ENCODE measurements at regions of chr13 and their contacts with region 1.

Region 1: DNA sequence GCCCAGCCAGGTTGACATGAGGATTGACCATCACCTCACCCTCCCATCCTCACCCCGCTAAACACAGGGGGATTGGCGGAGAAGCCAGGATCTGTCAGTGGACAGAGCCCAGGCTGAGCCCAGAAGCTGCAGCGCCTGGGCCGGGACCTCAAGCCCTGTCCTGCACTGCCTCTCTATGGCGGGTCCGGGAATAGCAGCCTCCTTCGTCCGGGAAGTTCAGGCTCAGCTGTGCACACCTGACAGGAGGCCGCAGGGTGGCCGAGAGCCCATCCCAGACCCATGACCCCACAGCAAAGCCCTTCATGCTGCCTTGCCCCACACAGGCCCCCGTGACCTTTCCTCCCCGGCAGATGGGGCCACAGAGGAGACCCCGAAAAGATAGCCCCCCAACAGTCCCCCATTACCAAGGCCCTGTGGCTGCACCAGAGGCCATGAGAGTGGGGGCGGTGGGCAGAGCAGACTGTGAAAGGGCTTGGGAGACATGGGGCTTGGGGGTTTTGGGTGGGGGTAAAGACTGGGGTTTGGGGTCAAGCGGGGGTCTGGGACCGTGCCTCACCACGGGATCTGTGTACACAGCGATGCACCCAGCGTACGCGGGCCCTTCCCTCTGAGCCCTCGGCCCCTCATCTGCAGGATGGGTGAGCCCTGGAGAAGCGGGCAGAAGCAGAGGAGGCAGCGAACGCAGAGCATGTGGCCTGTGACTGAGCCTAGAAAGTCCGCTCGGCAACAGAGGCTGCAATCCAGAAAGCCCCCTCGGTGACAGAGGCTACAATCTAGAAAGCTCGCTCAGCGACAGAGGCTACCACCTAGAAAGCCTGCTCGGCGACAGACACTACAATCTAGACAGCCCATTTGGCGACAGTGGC is 68.1 kb downstream of the SPACA7 start:
- DNase-seq: peak; percentile 88
- H3K4me3 ChIP-seq: peak overlapping the region in 1 of 2 experiments; percentile 49; a peak in 2 of 4 replicates
- H3K27ac ChIP-seq: no peak overlapping the region
- H3K4me1 ChIP-seq: no peaks in the 10 kb centered on the region; a peak in 1 of 4 replicates
- H3K27me3 ChIP-seq: peaks cover 60% of the 10 kb centered on the region
- CTCF ChIP-seq: peak; percentile 78
- EP300 ChIP-seq: no peak
- RAD21 ChIP-seq: peak; percentile 93

Region 2: GRCh38 chr13:111474136-111475002 is 969.9 kb before region 1 on chr13:
- CTCF ChIA-PET with region 1: interaction called, 81 read pairs
- POLR2A ChIA-PET with region 1: no interaction called
- DNase-seq: peak; percentile 75
- H3K4me3 ChIP-seq: no peak overlapping the region; a peak in 1 of 4 replicates
- H3K27ac ChIP-seq: no peak overlapping the region
- H3K4me1 ChIP-seq: no peaks in the 10 kb centered on the region
- H3K27me3 ChIP-seq: peaks cover 46% of the 10 kb centered on the region
- CTCF ChIP-seq: peak; percentile 70
- EP300 ChIP-seq: no peak
- RAD21 ChIP-seq: peak; percentile 81

Region 3: DNA sequence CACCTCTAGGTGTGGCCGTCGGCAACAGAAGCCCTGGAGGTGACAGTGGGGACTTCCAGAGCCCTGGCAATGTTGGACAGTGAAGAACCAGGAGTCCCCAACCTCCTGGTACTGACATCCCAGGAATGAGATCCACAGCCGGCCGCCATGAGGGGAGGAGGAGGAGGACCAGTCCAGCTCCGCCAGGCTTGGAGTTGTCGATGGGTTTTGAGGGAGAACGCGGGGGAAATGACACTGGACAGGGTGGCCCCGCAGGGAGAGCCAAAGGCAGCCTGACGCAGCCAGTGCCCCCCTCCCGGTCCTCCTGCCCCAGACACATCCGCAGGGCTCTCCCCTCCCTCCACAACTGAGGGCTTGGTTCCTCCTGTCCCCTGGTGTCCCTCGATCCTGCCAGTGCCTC is 10.2 kb before region 1 on chr13:
- CTCF ChIA-PET with region 1: interaction called, 20 read pairs
- POLR2A ChIA-PET with region 1: no interaction called
- DNase-seq: no peak
- H3K4me3 ChIP-seq: no peak overlapping the region
- H3K27ac ChIP-seq: no peak overlapping the region
- H3K4me1 ChIP-seq: no peaks in the 10 kb centered on the region
- H3K27me3 ChIP-seq: no peaks in the 10 kb centered on the region
- CTCF ChIP-seq: no peak
- EP300 ChIP-seq: no peak
- RAD21 ChIP-seq: no peak

Region 4: DNA sequence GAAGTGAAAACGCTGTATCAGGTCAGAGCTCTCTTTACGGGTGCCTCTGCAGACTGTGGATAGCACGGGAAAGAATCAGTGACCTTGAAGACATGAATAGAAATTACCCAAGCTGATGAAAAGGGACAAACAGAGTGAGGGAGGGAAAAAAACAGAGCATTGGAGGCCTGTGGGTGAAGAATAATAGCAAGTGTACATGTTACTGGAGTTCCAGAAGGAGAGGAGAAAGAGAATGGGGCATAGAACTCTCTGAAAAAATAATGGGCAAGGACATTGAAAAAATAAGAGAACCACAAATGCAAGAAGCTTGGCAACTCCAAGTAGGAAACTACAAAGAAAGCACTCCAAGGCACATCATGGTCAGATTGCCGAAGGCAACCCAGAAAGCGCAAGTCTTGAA is 18.2 kb after region 1 on chr13:
- CTCF ChIA-PET with region 1: interaction called, 17 read pairs
- POLR2A ChIA-PET with region 1: no interaction called
- DNase-seq: no peak
- H3K4me3 ChIP-seq: no peak overlapping the region
- H3K27ac ChIP-seq: no peak overlapping the region
- H3K4me1 ChIP-seq: no peaks in the 10 kb centered on the region
- H3K27me3 ChIP-seq: no peaks in the 10 kb centered on the region
- CTCF ChIP-seq: no peak
- EP300 ChIP-seq: no peak
- RAD21 ChIP-seq: no peak

Region 5: DNA sequence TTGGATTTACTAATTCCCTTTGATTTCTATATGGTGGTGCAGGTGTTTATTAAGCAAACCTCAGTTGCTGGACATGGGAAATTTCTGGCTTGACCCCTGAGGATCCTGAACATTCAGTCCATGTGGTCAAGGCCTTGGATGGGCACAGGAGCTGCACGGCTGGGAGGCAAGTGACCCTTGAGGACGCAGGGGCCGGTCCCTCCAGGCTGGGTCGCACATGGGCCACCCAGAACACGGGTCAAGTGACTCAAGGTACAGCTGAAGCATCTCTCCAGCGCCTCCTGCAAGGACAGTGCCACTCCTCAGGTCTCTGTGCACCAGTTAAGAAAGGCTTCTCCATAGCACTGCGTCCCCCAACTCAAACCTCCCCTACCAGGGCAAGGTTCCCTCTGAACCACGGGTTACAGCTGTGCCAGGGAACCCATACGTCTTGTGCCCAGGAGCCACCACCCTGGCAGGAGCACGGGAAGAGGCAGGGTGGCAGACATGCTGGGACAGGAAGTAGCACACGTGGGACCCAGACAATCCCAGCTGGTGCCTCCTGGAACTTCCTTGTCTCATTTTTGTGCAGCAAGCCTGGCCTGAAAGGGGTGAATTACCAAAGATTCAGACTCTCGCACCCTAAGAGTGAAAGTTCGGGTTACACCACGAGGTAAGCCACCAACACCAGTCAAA is 25.0 kb after region 1 on chr13:
- CTCF ChIA-PET with region 1: interaction called, 12 read pairs
- POLR2A ChIA-PET with region 1: no interaction called
- DNase-seq: no peak
- H3K4me3 ChIP-seq: no peak overlapping the region
- H3K27ac ChIP-seq: no peak overlapping the region
- H3K4me1 ChIP-seq: no peaks in the 10 kb centered on the region
- H3K27me3 ChIP-seq: no peaks in the 10 kb centered on the region
- CTCF ChIP-seq: no peak
- EP300 ChIP-seq: no peak
- RAD21 ChIP-seq: no peak

Region 6: GRCh38 chr13:112606109-112607001 is 162.1 kb after region 1 on chr13:
- CTCF ChIA-PET with region 1: interaction called, 32 read pairs
- POLR2A ChIA-PET with region 1: no interaction called
- DNase-seq: peak; percentile 94
- H3K4me3 ChIP-seq: peak overlapping the region; percentile 55 to 61
- H3K27ac ChIP-seq: no peak overlapping the region; a peak in 1 of 4 replicates
- H3K4me1 ChIP-seq: no peaks in the 10 kb centered on the region; a peak in 1 of 4 replicates
- H3K27me3 ChIP-seq: no peaks in the 10 kb centered on the region; the same call in 1 of the 2 replicates
- CTCF ChIP-seq: peak; percentile 95
- EP300 ChIP-seq: no peak
- RAD21 ChIP-seq: peak; percentile 93

Measured in SK-N-SH (cell line).